Psoas muscle (tissue), 8 donors: ENCODE measurements at regions of chr2 and their contacts with region 1.

Region 1: GRCh38 chr2:61288070-61288841 is 126.3 kb downstream of the C2orf74 start:
- DNase-seq: no peak
- ATAC-seq: no peak
- H3K4me3 ChIP-seq: no peak overlapping the region
- H3K27ac ChIP-seq: no peak overlapping the region
- H3K4me1 ChIP-seq: no peaks in the 10 kb centered on the region
- H3K27me3 ChIP-seq: no peaks in the 10 kb centered on the region
- CTCF ChIP-seq: no peak

Region 2: DNA sequence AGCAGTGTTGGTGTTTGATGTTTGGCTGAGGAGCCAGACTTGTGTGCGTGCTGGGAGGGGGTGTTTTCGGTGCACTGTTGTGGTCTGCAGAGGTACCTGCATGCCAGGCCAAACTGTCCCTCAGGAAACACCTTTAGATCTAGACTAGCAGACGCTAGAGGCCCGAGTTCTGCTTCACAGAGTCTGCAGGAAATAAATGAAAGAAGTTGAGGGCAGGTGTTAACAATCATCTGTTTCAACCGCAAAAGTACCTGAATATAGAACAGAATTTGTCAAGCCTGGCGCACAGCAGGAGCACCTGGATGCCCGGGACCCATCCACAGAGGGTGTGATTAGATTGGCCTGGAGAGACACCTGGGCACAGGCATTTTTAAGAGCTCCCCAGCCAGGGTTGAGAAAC is 447.4 kb before region 1 on chr2:
- intact Hi-C with region 1: no loop called
- DNase-seq: no peak
- ATAC-seq: no peak
- H3K4me3 ChIP-seq: no peak overlapping the region
- H3K27ac ChIP-seq: no peak overlapping the region
- H3K4me1 ChIP-seq: no peaks in the 10 kb centered on the region
- H3K27me3 ChIP-seq: no peaks in the 10 kb centered on the region
- CTCF ChIP-seq: no peak

Region 3: GRCh38 chr2:61335187-61335586 is 46.9 kb after region 1 on chr2:
- intact Hi-C with region 1: loop called in 1 of 2 experiments (anchors 10 kb)
- DNase-seq: no peak
- ATAC-seq: no peak
- H3K4me3 ChIP-seq: no peak overlapping the region
- H3K27ac ChIP-seq: no peak overlapping the region
- H3K4me1 ChIP-seq: no peaks in the 10 kb centered on the region
- H3K27me3 ChIP-seq: no peaks in the 10 kb centered on the region
- CTCF ChIP-seq: no peak